ENCODE measurements at regions of chr2 and their contacts with region 1.

Region 1: GRCh38 chr2:173571021-173571882 is 216.6 kb downstream of the CDCA7 start:
- DNase-seq: peak; percentile 30
- H3K4me3 ChIP-seq: no peak overlapping the region
- H3K27ac ChIP-seq: no peak overlapping the region
- H3K4me1 ChIP-seq: peaks cover 28% of the 10 kb centered on the region
- H3K27me3 ChIP-seq: no peaks in the 10 kb centered on the region
- CTCF ChIP-seq: peak; percentile 31 to 52

Region 2: DNA sequence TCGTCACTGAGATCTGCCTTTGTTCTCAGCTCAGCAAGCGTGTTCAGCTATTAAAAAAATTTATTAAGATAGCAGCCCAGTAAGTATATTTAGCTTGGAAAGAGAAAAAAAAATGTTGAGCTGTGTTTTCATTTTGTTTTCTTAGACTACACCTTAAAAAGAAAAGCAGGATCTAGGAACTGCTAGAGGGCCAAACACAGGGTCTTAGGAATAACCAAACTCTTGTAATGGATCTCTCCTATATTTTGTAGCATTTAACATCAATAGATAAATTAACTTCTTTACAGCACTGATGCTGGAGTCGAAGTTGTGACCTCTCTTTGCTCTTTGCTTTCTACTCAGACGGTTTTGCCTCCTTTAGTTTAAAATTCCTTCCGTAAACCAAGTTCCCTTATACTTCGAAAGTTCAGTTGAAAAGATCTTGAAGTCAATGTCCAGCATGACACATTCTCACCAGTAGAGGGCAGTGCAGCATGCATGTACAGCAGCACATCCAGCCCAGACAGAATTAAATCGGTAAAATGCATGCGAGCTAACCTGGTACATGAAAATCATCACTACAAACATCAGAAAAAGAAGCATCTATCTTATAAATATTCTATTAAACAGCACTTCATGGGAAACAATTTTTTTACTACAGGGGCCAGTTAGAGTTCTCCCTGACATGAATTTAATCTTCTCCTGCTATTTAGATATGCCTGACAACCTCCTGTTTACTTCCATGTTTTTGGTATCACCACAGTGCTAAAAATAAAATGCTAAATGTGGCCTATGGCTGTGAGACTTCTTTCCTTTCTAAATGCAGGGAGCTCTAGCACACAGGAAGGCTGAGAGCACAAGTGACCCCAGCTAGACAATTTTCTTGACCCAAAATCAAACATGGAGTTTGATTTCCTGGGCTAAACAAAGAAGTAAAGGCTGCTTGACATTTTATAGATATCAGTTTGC is 543.8 kb before region 1 on chr2:
- CTCF ChIA-PET with region 1: no interaction called
- dilution Hi-C with region 1: no loop called
- in situ Hi-C with region 1: no loop called
- intact Hi-C with region 1: no loop called
- DNase-seq: peak; percentile 73
- H3K4me3 ChIP-seq: no peak overlapping the region
- H3K27ac ChIP-seq: peak overlapping the region; percentile 27
- H3K4me1 ChIP-seq: peaks cover 20% of the 10 kb centered on the region
- H3K27me3 ChIP-seq: no peaks in the 10 kb centered on the region
- CTCF ChIP-seq: peak; percentile 93

Region 3: DNA sequence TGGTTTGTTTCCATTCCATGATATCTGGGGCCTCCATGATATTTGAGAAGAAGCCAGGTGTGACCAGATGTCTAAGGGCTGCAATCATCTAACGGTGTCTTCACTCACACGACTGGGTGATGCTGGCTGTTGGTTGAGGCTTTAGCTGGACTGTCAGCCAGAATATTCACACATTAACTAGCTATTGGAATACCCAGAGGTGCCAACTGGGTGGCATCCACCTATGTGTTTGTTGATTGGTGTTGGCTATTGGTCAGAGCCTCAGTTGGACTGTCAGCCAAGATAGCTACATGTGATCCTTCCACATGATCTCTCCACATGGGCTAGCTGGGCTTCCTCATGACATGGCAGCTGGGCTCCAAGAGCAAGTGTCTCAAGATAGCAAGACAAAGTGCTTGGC is 99.1 kb before region 1 on chr2:
- CTCF ChIA-PET with region 1: no interaction called
- dilution Hi-C with region 1: no loop called
- in situ Hi-C with region 1: no loop called
- intact Hi-C with region 1: loop called (anchors 10 kb)
- DNase-seq: no peak
- H3K4me3 ChIP-seq: no peak overlapping the region
- H3K27ac ChIP-seq: no peak overlapping the region
- H3K4me1 ChIP-seq: no peaks in the 10 kb centered on the region
- H3K27me3 ChIP-seq: peaks cover 2% of the 10 kb centered on the region
- CTCF ChIP-seq: no peak

Region 4: DNA sequence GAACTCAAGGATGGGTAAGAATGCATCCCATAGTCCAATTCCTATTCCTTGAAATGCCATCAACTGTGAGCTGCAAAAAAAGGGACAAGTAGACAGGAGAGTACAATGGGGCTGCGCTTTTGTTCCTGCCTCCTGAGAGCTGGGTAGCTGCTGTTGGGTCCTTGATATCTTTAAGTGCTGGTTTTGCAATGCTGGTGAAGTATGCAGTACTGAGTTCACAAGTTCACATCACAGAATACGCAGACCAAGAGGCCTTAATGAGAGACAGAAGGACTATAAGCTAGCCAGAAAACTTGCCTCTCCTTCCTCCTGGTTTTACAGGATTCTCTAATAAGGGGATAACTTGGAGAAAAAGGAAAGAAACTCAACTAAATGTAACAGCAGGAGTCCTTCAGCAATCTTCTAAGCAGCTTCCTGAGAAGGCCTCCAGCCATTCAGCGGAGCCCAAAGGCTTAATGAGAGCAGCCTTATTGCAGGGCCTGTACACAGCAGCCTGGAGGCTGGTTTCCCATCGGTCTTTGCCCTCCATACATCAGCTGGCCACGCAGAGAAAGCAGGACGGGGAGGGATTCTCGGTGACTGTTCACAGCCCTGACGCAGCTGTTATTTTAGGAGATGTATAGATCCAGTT is 76.5 kb after region 1 on chr2:
- CTCF ChIA-PET with region 1: no interaction called
- dilution Hi-C with region 1: loop called (anchors 5 kb)
- in situ Hi-C with region 1: no loop called
- intact Hi-C with region 1: loop called (anchors 1 kb)
- DNase-seq: no peak
- H3K4me3 ChIP-seq: no peak overlapping the region
- H3K27ac ChIP-seq: no peak overlapping the region
- H3K4me1 ChIP-seq: peaks cover 25% of the 10 kb centered on the region
- H3K27me3 ChIP-seq: no peaks in the 10 kb centered on the region
- CTCF ChIP-seq: no peak

Region 5: DNA sequence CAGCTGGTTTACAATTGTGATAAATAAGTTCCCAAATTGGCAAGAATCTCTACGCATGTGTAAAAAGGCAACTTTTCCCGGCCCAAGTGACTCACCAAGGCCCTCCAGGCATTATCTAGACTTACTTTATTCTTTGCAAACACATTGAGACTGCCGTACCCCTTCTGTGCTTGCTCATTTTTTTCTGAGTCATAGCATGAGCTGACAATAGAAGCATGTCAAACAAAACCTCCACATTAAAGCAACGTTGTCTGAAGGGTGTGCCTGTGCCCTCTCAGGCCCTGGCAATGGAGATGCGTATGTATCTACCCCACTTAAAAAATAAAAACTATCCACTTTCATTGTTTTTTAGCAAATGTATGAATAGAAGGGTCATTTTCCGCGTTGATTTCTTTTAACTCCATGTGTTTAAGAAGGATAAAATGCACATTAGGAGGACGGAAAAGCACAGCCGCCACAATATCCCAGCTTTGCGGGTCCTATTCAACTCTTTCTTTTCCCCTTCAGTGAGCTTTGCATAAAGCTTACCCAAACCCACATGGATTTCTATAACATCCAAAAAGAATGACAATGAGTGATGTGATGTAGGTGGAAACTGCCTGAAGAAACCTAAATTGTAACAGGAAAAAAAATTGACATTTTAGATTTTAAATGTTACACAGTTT is 81.6 kb after region 1 on chr2:
- CTCF ChIA-PET with region 1: no interaction called
- dilution Hi-C with region 1: loop called (anchors 5 kb)
- in situ Hi-C with region 1: no loop called
- intact Hi-C with region 1: loop called (anchors 1 kb)
- DNase-seq: peak; percentile 98
- H3K4me3 ChIP-seq: no peak overlapping the region
- H3K27ac ChIP-seq: peak overlapping the region; percentile 98
- H3K4me1 ChIP-seq: peaks cover 44% of the 10 kb centered on the region
- H3K27me3 ChIP-seq: no peaks in the 10 kb centered on the region
- CTCF ChIP-seq: no peak

Region 6: GRCh38 chr2:173667417-173667816 is 96.2 kb after region 1 on chr2:
- CTCF ChIA-PET with region 1: no interaction called
- dilution Hi-C with region 1: no loop called
- in situ Hi-C with region 1: no loop called
- intact Hi-C with region 1: loop called (anchors 1 kb)
- DNase-seq: peak; percentile 60
- H3K4me3 ChIP-seq: no peak overlapping the region
- H3K27ac ChIP-seq: peak overlapping the region; percentile 58
- H3K4me1 ChIP-seq: peaks cover 20% of the 10 kb centered on the region
- H3K27me3 ChIP-seq: no peaks in the 10 kb centered on the region
- CTCF ChIP-seq: peak; percentile 55 to 70

Region 7: DNA sequence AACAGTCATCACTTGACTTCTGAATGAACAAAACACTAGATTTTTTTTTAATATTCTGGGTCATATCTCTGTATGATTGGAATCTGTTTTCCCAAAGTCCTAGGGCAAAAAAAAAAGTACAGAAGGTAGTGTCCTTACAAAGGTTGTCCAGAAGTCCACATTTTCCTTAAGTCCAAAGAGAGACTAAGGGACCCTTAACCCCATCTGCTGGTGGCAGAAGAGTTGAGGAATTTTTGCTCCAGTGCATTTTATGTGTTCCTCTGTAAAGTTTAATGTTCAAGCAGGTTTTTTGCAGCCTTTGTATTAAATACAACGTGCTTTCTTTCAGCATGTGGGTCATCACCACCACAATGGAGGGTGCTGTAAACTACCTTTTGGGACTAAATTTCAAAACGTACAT is 178.1 kb after region 1 on chr2:
- CTCF ChIA-PET with region 1: no interaction called
- dilution Hi-C with region 1: no loop called
- in situ Hi-C with region 1: no loop called
- intact Hi-C with region 1: loop called (anchors 1 kb)
- DNase-seq: peak; percentile 6
- H3K4me3 ChIP-seq: no peak overlapping the region
- H3K27ac ChIP-seq: no peak overlapping the region
- H3K4me1 ChIP-seq: no peaks in the 10 kb centered on the region
- H3K27me3 ChIP-seq: no peaks in the 10 kb centered on the region
- CTCF ChIP-seq: peak in 1 of 2 donors; percentile 52

Region 8: DNA sequence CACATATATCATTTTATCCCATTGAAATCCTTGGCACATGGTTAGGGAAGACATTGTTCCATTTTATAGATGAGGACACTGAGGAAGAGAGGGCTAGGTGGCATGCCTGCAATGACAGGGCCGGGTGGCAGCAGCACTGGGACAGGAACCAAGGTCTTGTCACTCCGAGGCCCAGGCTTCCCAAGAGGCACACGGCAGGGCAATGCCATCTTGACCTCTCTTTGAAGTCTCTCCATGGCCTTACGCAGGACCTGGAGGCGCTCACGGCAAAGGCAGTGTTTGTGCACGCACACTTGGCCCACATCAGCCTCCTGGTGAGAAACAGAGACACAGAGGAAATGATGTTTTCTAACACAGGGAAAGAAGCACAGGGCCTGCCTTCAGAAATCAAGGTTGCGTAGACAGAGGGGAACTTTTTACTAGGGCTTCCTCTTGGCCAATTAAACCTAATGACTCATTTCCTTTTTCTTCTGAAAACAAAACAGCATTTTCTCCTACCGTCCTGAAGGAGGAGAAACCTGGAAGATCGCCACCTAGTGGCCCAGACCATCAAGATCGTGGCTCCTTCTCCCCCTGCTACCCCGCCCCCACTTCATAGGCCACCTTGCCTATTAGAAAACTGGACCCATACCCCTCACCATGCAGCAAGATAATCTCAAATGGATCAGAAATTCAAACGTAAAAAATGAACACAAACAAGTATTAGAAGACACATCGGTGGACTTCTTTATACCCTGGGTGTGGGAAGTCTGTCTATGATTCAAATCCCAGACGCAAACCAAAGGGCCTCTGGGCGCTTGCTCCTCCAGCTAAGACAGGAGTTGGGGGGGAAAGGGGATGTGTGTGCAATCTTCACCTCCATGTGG is 468.5 kb after region 1 on chr2:
- CTCF ChIA-PET with region 1: no interaction called
- dilution Hi-C with region 1: no loop called
- in situ Hi-C with region 1: loop called in 1 of 2 experiments (anchors 25 kb)
- intact Hi-C with region 1: loop called (anchors 1 kb)
- DNase-seq: peak; percentile 90
- H3K4me3 ChIP-seq: peak overlapping the region in 1 of 3 experiments; percentile 14
- H3K27ac ChIP-seq: peak overlapping the region; percentile 69
- H3K4me1 ChIP-seq: peaks cover 17% of the 10 kb centered on the region
- H3K27me3 ChIP-seq: no peaks in the 10 kb centered on the region
- CTCF ChIP-seq: peak; percentile 80 to 93

Measured in mammary epithelial cell (primary cell).